Dorsolateral prefrontal cortex (tissue), 120 donors: ENCODE measurements at regions of chr15 and their contacts with region 1.

Region 1: DNA sequence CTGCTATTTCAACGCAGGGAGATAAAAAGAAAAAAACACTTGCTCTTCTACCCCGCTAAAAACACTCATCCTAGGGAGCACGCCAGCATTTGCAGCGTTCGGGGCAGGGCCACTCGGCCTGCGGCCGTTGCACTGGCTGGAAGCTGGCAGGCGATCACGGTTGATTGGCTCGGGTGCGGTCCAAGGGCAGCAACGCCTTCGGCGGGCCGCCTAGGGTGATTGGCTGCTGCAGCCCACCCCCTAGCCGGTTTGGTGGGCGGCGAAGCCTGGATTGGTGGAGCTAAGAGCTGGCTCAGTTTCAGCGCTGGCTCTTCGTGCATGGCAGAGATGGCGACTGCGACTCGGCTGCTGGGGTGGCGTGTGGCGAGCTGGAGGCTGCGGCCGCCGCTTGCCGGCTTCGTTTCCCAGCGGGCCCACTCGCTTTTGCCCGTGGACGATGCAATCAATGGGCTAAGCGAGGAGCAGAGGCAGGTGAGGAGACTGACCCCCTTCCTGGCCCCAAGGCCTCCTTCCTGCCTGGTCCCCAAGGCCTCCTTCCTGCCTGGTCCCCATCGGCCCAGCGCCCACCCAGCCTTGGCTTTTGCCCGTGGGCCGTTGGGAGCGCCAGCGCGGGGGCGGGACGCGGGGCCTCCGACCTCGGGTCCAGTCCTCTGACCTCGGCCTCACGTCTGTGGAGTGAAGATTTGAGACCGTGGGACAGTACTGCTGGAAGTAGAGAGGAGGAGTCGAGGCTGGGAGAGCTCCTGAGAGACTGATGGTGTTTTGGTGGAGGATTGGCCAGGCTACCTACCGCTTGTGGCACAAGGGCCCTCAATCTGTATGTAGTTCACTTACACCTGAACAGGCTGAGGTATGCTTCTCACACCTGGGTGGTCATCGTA is at the start of gene IVD:
- DNase-seq: peak; percentile 93 to 99 (median 97)
- H3K4me3 ChIP-seq: peak within 1 kb of the TSS; percentile 69 to 99 (median 87)
- H3K27ac ChIP-seq: peak within 1 kb of the TSS; percentile 67 to 97 (median 92)
- H3K27me3 ChIP-seq: no peaks in the 10 kb centered on the region
- CTCF ChIP-seq: peak in 39 of 56 donors; percentile 4 to 59 (median 31)
- total RNA-seq, gene IVD: 64.9 to 126 (median 91.0) TPM

Region 2: GRCh38 chr15:39833515-39833981 is 572.2 kb before region 1 on chr15:
- intact Hi-C with region 1: no loop called
- DNase-seq: no peak
- H3K4me3 ChIP-seq: no peak overlapping the region
- H3K27ac ChIP-seq: no peak overlapping the region
- H3K27me3 ChIP-seq: no peaks in the 10 kb centered on the region
- CTCF ChIP-seq: no peak

Region 3: GRCh38 chr15:40344631-40345120 is 61.1 kb before region 1 on chr15:
- intact Hi-C with region 1: loop called in 1 of 2 experiments (anchors 5 kb)
- DNase-seq: peak in 6 of 10 donors; percentile 40 to 89 (median 70)
- H3K4me3 ChIP-seq: peak overlapping the region in 3 of 59 donors; percentile 8 to 26 (median 9)
- H3K27ac ChIP-seq: peak overlapping the region in 3 of 59 donors; percentile 15 to 59 (median 45)
- H3K27me3 ChIP-seq: no peaks in the 10 kb centered on the region
- CTCF ChIP-seq: peak; percentile 56 to 90 (median 81)

Region 4: GRCh38 chr15:40367686-40368611 is 37.8 kb before region 1 on chr15:
- intact Hi-C with region 1: loop called in 1 of 2 experiments (anchors 5 kb)
- DNase-seq: peak; percentile 67 to 85 (median 78)
- H3K4me3 ChIP-seq: peak overlapping the region in 53 of 59 donors; percentile 1 to 59 (median 38)
- H3K27ac ChIP-seq: peak overlapping the region in 43 of 59 donors; percentile 3 to 87 (median 48)
- H3K27me3 ChIP-seq: no peaks in the 10 kb centered on the region
- CTCF ChIP-seq: peak; percentile 33 to 96 (median 80)

Region 5: DNA sequence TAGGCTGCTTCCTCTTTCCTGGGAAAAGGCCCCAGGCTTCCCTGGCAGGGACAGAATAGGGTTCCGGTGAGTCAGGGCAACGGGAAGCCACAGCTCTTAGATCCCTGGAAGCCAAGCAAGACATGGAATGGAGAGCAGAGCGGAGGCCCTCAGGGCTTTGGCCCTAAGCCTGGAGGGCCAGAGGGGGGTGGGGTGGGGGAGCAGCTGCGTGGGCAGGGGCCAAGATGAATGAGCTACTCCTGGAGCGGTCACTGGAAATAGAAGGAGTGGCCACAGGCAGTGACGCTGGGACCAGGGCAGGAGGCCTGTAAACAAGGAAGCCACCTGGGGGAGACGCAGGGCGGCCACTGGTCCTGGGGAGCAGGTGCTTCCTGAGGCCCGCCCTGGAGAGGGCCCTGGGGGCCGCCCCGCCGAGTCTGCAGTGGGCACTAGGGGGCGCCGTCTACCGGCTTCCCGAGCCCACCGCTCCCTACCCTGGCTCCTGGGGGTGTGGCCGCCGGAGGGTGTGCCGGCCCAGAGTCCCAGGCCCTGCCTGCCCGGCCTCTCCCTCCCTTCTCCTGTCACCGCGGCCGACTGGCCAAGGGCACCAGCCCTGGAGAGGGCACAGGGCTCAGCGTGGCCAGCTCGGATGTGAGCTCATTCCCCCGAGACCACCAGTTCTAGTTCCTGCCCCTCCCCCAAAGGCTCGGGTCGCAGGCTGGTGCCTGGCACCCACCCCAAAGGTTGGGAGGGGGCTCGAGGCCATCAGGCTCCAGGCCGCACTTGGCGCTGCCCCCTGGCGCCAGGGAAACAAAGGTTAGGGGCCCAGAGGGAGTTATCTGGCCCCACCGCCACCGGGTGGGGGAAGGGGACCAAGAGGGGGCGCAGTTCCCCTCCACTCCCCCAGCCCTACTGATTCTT is 500.6 kb after region 1 on chr15:
- intact Hi-C with region 1: no loop called
- DNase-seq: peak in 9 of 10 donors; percentile 41 to 71 (median 49)
- H3K4me3 ChIP-seq: peak overlapping the region; percentile 22 to 71 (median 49)
- H3K27ac ChIP-seq: peak overlapping the region in 58 of 59 donors; percentile 21 to 92 (median 78)
- H3K27me3 ChIP-seq: no peaks in the 10 kb centered on the region
- CTCF ChIP-seq: peak; percentile 12 to 87 (median 73)